ENCODE measurements at regions of chr11 and their contacts with region 1.

Region 1: GRCh38 chr11:47552566-47553416 is at the start of gene CELF1:
- DNase-seq: peak; percentile 88 to 95 (median 92)
- ATAC-seq: peak; percentile 99
- H3K4me3 ChIP-seq: peak within 1 kb of the TSS; percentile 87
- H3K4me3 Mint-ChIP-seq: peak within 1 kb of the TSS; percentile 93 to 100 (median 96)
- H3K27ac ChIP-seq: peak within 1 kb of the TSS; percentile 89
- H3K27ac Mint-ChIP-seq: peak within 1 kb of the TSS; percentile 86 to 97 (median 95)
- H3K4me1 ChIP-seq: peaks cover 27 to 34% of the 10 kb centered on the region in 2 donors
- H3K4me1 Mint-ChIP-seq: peaks cover 36 to 57% (median 42%) of the 10 kb centered on the region in 7 donors
- H3K27me3 ChIP-seq: no peaks in the 10 kb centered on the region
- H3K27me3 Mint-ChIP-seq: no peaks in the 10 kb centered on the region
- total RNA-seq, gene CELF1: 107 to 148 (median 129) TPM

Region 2: GRCh38 chr11:45917623-45918330 is 1635.0 kb before region 1 on chr11 and contains the start of gene PEX16:
- CTCF ChIA-PET with region 1: no interaction called
- POLR2A ChIA-PET with region 1: no interaction called
- intact Hi-C with region 1: loop called in 1 of 2 experiments (anchors 5 kb)
- DNase-seq: peak; percentile 86 to 98 (median 97)
- ATAC-seq: peak; percentile 95
- H3K4me3 ChIP-seq: peak within 1 kb of the TSS; percentile 72
- H3K4me3 Mint-ChIP-seq: peak within 1 kb of the TSS; percentile 86 to 98 (median 96)
- H3K27ac ChIP-seq: peak within 1 kb of the TSS; percentile 87
- H3K27ac Mint-ChIP-seq: peak within 1 kb of the TSS; percentile 91 to 100 (median 98)
- H3K4me1 ChIP-seq: peaks cover 24 to 36% of the 10 kb centered on the region in 2 donors
- H3K4me1 Mint-ChIP-seq: peaks cover 31 to 66% (median 49%) of the 10 kb centered on the region in 7 donors
- H3K27me3 ChIP-seq: no peaks in the 10 kb centered on the region
- H3K27me3 Mint-ChIP-seq: peaks cover 0 to 13% (median 4%) of the 10 kb centered on the region in 5 donors
- total RNA-seq, gene PEX16: 48.2 to 64.3 (median 58.1) TPM

Region 3: DNA sequence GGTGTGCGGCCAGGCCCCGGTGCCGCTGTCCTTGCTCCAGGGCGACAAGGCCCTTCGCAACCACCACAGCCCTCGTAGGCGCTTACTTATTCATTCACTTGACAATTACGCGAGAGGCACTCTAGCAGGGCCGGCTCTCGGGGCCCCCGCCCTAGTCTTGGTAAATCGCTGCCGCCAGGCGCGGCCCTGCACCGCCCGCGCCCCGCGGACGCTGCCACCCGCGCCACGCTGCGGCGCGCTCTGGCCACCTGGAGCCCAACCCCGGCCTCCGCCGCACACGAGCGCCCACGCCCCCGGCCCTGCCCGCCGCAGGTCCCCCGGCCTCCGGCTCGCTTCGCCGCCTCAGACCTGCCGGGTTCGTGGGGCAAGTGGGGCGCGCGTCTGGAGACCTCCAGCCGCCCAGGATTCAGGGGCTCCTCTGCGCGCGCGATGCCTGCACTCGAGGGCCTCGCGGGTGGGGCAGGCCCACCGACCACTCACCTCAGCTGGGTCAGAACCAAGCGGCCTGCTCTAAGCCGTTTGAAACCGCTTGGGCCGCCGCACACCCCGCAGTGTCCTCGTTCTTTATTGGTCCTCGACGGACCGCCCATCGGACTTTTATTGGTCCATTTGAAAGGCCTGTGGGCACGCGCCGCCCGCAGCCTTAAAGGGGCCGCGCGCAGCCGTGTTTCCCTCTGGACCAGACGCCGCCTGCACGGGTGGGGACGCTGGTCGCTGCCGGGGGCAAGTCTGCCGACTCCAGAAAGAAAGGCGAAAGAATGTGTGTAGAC is 706.9 kb before region 1 on chr11 and contains the start of gene CKAP5:
- CTCF ChIA-PET with region 1: no interaction called
- POLR2A ChIA-PET with region 1: no interaction called
- intact Hi-C with region 1: loop called in 1 of 2 experiments (anchors 10 kb)
- DNase-seq: peak; percentile 63 to 89 (median 80)
- ATAC-seq: peak; percentile 96
- H3K4me3 ChIP-seq: peak within 1 kb of the TSS; percentile 71
- H3K4me3 Mint-ChIP-seq: peak within 1 kb of the TSS; percentile 85 to 99 (median 97)
- H3K27ac ChIP-seq: peak within 1 kb of the TSS; percentile 71
- H3K27ac Mint-ChIP-seq: peak within 1 kb of the TSS; percentile 88 to 97 (median 93)
- H3K4me1 ChIP-seq: peaks cover 0 to 14% of the 10 kb centered on the region in 2 donors
- H3K4me1 Mint-ChIP-seq: peaks cover 33 to 50% (median 43%) of the 10 kb centered on the region in 7 donors
- H3K27me3 ChIP-seq: no peaks in the 10 kb centered on the region
- H3K27me3 Mint-ChIP-seq: no peaks in the 10 kb centered on the region
- total RNA-seq, gene CKAP5: 28.3 to 126 (median 46.0) TPM

Region 4: DNA sequence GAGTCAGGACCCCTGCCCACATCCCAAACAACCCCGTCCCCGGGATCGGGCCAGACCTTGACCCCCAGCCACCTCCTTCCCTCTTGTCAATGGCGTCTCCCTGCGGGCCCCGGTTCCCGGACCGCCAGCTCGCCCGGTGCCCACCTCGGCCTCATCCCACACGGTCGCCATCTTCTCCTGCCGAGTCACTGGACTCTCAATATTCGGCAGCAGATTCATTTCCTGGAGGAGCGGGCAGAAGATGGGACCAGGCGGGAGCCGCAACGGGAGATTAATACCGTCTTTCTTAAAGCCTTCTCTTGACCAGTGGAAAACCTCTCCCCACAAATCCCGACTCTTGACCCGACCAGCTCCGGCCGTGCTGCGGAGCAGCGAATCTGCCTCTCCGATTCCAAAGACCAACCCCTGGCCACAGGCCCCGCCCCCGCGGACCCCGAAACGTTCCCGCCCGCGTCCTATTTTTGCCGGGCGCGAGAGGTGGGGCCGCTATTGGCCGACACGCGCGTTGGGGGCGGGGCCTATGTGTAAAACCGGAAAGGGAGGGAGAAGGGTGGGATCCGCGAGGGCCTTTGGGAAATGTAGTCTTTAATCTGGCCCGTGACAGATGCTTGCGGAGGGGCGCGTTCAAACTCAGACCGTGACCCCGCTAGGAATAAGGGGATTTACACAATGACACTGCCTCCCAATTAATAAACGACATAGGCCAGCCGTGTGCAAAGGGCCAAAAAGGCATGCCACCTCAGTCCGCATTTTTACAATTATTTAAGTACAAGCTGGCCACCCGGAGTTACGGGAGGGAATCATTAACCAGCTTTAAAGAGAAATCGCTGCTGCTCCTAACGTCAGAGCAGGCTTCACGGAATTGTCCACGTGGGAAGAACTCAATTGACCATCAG is 126.5 kb before region 1 on chr11 and contains the start of gene PSMC3:
- CTCF ChIA-PET with region 1: no interaction called
- POLR2A ChIA-PET with region 1: no interaction called
- intact Hi-C with region 1: loop called (anchors 1 kb)
- DNase-seq: peak; percentile 92 to 99 (median 95)
- ATAC-seq: peak; percentile 98
- H3K4me3 ChIP-seq: peak within 1 kb of the TSS; percentile 95
- H3K4me3 Mint-ChIP-seq: peak within 1 kb of the TSS; percentile 91 to 99 (median 98)
- H3K27ac ChIP-seq: peak within 1 kb of the TSS; percentile 96
- H3K27ac Mint-ChIP-seq: peak within 1 kb of the TSS; percentile 93 to 99 (median 97)
- H3K4me1 ChIP-seq: peaks cover 9 to 10% of the 10 kb centered on the region in 2 donors
- H3K4me1 Mint-ChIP-seq: peaks cover 16 to 32% (median 27%) of the 10 kb centered on the region in 7 donors
- H3K27me3 ChIP-seq: no peaks in the 10 kb centered on the region
- H3K27me3 Mint-ChIP-seq: no peaks in the 10 kb centered on the region
- total RNA-seq, gene PSMC3: 42.2 to 149 (median 51.3) TPM

Region 5: DNA sequence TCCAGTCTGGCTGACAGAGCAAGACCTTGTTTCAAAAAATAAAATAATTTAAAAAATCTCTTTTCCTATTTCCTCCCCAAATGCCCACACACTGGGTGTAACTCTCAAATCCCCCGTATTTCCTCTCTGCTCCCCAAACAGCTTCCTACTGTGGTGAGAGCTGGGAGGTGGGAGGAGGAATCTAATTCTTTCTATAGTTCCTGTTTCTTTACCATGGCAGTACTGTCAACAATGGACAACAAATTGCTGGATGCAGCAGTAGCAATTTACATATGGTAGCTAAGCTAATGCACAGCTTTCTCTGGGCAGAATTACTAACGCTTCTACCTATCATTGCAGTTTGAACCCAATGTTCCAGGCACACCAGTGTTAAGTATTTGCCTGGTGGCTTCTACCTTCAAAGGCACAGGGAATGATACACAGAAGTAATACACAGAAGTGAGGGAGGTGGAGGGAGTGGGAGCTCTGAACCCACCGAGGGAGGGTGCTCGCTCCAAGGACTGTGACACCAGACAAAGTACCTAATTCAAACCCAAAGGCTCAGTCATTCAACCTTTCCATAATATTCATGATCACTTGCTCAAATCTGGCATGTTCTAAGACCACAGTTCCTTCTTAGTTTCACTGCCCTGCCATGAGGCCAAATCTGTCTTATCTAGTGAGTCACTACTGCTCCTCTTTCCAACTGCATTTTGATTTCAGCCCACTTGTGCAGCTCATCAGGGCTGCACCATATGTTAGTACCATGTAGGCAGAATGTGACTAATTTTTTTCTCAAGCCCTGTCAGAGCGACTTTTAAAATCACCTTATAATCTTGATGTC is 37.8 kb before region 1 on chr11:
- CTCF ChIA-PET with region 1: interaction called, 3 read pairs
- POLR2A ChIA-PET with region 1: interaction called, 4 read pairs
- intact Hi-C with region 1: loop called in 1 of 2 experiments (anchors 5 kb)
- DNase-seq: peak in 1 of 9 donors; percentile 41
- ATAC-seq: peak; percentile 76
- H3K4me3 ChIP-seq: no peak overlapping the region
- H3K4me3 Mint-ChIP-seq: peak overlapping the region; percentile 30 to 71 (median 66)
- H3K27ac ChIP-seq: no peak overlapping the region
- H3K27ac Mint-ChIP-seq: peak overlapping the region; percentile 60 to 94 (median 82)
- H3K4me1 ChIP-seq: peaks cover 27 to 41% of the 10 kb centered on the region in 2 donors
- H3K4me1 Mint-ChIP-seq: peaks cover 52 to 98% (median 82%) of the 10 kb centered on the region in 7 donors
- H3K27me3 ChIP-seq: no peaks in the 10 kb centered on the region
- H3K27me3 Mint-ChIP-seq: no peaks in the 10 kb centered on the region

Region 6: DNA sequence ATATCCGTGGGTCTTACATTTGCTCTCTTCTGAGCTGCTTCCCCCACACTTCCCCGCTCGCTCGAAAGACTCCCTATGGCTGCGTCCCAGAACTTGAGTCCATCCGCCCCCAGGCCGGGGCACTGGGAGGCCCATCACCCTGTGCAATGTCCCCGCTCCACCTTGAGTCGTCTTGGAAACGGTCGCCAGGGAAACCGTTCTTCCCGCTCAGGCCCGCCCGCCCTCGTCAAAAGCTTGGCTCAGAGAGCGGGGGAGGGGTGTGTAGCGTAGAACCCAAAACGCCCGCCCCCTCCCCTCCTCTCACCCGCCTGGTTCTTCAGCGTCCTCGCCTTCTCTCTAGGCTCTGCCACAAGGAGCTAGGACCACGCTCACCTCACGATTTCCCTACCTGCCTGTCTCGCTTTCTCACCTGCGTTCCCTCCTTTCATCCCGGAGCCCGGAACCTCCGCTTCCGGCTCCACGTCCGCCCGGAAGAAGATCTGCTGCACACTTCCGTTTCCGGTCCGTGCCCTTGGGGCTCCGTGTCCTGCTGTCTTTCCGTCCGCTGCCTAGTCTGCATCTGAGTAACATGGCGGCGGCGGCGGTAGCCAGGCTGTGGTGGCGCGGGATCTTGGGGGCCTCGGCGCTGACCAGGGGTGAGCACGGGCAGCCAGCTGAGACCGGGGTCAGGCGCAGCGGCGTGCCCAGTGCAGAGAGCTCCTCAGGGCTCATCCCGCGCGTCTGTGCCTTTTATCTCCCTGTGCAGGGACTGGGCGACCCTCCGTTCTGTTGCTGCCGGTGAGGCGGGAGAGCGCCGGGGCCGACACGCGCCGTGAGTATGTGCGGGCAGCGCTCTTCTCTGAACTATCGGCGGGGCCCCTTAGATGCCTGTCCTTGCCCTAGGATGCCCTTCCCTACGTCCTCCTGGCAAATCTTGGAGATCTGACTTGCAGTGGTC is 26.0 kb after region 1 on chr11 and contains the starts of genes KBTBD4 and NDUFS3:
- CTCF ChIA-PET with region 1: interaction called, 6 read pairs
- POLR2A ChIA-PET with region 1: interaction called, 25 read pairs
- intact Hi-C with region 1: loop called (anchors 1 kb)
- DNase-seq: peak; percentile 85 to 95 (median 88)
- ATAC-seq: peak; percentile 97
- H3K4me3 ChIP-seq: peak within 1 kb of the TSS; percentile 95
- H3K4me3 Mint-ChIP-seq: peak within 1 kb of the TSS; percentile 95 to 100 (median 99)
- H3K27ac ChIP-seq: peak within 1 kb of the TSS; percentile 80
- H3K27ac Mint-ChIP-seq: peak within 1 kb of the TSS; percentile 97 to 100 (median 99)
- H3K4me1 ChIP-seq: peaks cover 26 to 28% of the 10 kb centered on the region in 2 donors
- H3K4me1 Mint-ChIP-seq: peaks cover 17 to 51% (median 41%) of the 10 kb centered on the region in 7 donors
- H3K27me3 ChIP-seq: no peaks in the 10 kb centered on the region
- H3K27me3 Mint-ChIP-seq: no peaks in the 10 kb centered on the region
- total RNA-seq, gene KBTBD4: 15.0 to 26.5 (median 20.9) TPM
- total RNA-seq, gene NDUFS3: 68.6 to 116 (median 85.2) TPM

Region 7: GRCh38 chr11:47766305-47767227 is 213.8 kb after region 1 on chr11:
- CTCF ChIA-PET with region 1: no interaction called
- POLR2A ChIA-PET with region 1: interaction called, 3 read pairs
- intact Hi-C with region 1: loop called (anchors 1 kb)
- DNase-seq: peak; percentile 60 to 84 (median 79)
- ATAC-seq: peak; percentile 52
- H3K4me3 ChIP-seq: peak overlapping the region; percentile 94
- H3K4me3 Mint-ChIP-seq: peak overlapping the region; percentile 88 to 100 (median 96)
- H3K27ac ChIP-seq: peak overlapping the region; percentile 97
- H3K27ac Mint-ChIP-seq: peak overlapping the region; percentile 96 to 100 (median 99)
- H3K4me1 ChIP-seq: peaks cover 20 to 22% of the 10 kb centered on the region in 2 donors
- H3K4me1 Mint-ChIP-seq: peaks cover 16 to 39% (median 23%) of the 10 kb centered on the region in 7 donors
- H3K27me3 ChIP-seq: no peaks in the 10 kb centered on the region
- H3K27me3 Mint-ChIP-seq: no peaks in the 10 kb centered on the region

Measured in naive thymus-derived CD4-positive, alpha-beta T cell (primary cell).